Naive thymus-derived CD4-positive, alpha-beta T cell (primary cell): ENCODE measurements at regions of chr1 and their contacts with region 1.

Region 1: DNA sequence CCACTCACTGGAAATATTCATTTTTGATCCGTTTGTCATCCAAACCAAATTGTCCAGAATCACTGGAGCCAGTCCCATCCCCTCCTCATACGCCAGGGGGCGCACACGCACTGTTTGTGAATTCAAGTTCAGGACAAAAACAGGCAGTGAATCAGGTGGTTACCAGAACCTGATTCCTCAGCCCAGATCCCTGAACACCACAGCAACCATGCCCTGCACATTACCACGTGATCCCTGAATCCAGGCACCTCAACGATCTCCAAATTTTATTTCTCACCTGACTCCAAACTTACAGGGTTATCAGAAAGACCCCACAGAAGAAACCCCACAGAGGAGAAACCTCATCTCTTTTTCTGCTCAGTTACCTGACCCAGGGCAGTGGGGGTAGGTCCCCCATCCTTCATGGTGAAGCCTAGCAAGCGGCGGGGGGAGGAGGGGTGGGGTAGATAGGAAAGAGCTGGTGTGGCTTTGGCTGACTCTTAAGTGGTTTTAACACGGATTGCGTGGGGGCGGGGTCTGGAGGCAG is 1.4 kb upstream of the PTPRF start:
- DNase-seq: peak; percentile 53 to 82 (median 75)
- ATAC-seq: peak; percentile 76
- H3K4me3 ChIP-seq: no peak overlapping the region
- H3K4me3 Mint-ChIP-seq: peak overlapping the region; percentile 16 to 97 (median 54)
- H3K27ac ChIP-seq: no peak overlapping the region
- H3K27ac Mint-ChIP-seq: peak overlapping the region in 1 of 9 donors; percentile 69
- H3K4me1 ChIP-seq: peaks cover 0 to 3% of the 10 kb centered on the region in 2 donors
- H3K4me1 Mint-ChIP-seq: peaks cover 16 to 27% (median 22%) of the 10 kb centered on the region in 7 donors
- H3K27me3 ChIP-seq: peaks cover 8 to 9% of the 10 kb centered on the region in 2 donors
- H3K27me3 Mint-ChIP-seq: peaks cover 43 to 57% (median 49%) of the 10 kb centered on the region in 5 donors

Region 2: DNA sequence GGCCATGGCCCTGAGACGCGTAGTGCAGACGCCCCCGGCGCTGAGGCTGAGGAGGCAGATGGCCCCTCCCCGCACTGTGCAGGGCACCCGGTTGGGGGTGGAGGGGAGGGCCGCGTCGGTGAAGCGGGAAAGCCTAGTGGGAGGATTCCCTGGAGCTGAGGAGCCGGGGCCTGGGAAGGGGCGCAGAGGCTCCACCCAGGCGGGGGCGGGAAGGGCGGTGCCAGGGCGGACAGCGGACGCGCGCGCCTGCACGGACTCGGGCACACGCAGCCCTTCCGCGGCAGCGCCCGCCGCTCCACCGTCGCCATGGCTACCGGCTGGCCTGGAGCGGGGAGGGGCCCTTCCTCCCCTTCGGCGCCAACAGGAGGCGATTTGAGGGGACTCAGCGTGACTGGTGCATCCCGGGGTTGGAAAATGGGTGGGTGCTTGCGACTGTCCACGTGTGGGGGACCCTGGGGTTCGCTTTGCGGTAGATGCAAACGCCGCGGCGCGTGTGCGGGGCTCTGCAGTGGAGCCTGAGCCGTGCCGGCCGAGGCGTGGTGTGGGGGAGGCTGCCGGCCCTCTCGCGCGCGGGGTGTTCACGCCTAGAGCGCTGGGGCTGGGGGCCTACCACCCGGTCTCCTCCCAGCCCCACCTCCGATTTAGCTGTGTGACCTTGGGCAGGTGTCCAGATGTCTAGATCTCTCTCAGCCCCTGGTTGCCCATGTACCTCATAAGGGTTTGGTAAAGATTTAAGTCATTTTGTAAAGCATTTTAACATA is 36.5 kb after region 1 on chr1:
- CTCF ChIA-PET with region 1: no interaction called
- POLR2A ChIA-PET with region 1: no interaction called
- intact Hi-C with region 1: loop called in 1 of 2 experiments (anchors 2 kb)
- DNase-seq: peak in 6 of 9 donors; percentile 14 to 78 (median 20)
- ATAC-seq: peak; percentile 76
- H3K4me3 ChIP-seq: peak overlapping the region; percentile 30
- H3K4me3 Mint-ChIP-seq: peak overlapping the region; percentile 56 to 80 (median 75)
- H3K27ac ChIP-seq: no peak overlapping the region
- H3K27ac Mint-ChIP-seq: no peak overlapping the region
- H3K4me1 ChIP-seq: no peaks in the 10 kb centered on the region
- H3K4me1 Mint-ChIP-seq: peaks cover 0 to 12% (median 4%) of the 10 kb centered on the region in 7 donors
- H3K27me3 ChIP-seq: no peaks in the 10 kb centered on the region
- H3K27me3 Mint-ChIP-seq: peaks cover 0 to 12% (median 8%) of the 10 kb centered on the region in 5 donors

Region 3: GRCh38 chr1:43763497-43763973 is 234.3 kb after region 1 on chr1:
- CTCF ChIA-PET with region 1: interaction called, 4 read pairs
- POLR2A ChIA-PET with region 1: no interaction called
- intact Hi-C with region 1: loop called (anchors 1 to 5 kb)
- DNase-seq: peak; percentile 13 to 54 (median 45)
- ATAC-seq: peak; percentile 82
- H3K4me3 ChIP-seq: no peak overlapping the region
- H3K4me3 Mint-ChIP-seq: no peak overlapping the region
- H3K27ac ChIP-seq: no peak overlapping the region
- H3K27ac Mint-ChIP-seq: no peak overlapping the region
- H3K4me1 ChIP-seq: no peaks in the 10 kb centered on the region
- H3K4me1 Mint-ChIP-seq: peaks cover 0 to 12% (median 4%) of the 10 kb centered on the region in 7 donors
- H3K27me3 ChIP-seq: no peaks in the 10 kb centered on the region
- H3K27me3 Mint-ChIP-seq: no peaks in the 10 kb centered on the region

Region 4: DNA sequence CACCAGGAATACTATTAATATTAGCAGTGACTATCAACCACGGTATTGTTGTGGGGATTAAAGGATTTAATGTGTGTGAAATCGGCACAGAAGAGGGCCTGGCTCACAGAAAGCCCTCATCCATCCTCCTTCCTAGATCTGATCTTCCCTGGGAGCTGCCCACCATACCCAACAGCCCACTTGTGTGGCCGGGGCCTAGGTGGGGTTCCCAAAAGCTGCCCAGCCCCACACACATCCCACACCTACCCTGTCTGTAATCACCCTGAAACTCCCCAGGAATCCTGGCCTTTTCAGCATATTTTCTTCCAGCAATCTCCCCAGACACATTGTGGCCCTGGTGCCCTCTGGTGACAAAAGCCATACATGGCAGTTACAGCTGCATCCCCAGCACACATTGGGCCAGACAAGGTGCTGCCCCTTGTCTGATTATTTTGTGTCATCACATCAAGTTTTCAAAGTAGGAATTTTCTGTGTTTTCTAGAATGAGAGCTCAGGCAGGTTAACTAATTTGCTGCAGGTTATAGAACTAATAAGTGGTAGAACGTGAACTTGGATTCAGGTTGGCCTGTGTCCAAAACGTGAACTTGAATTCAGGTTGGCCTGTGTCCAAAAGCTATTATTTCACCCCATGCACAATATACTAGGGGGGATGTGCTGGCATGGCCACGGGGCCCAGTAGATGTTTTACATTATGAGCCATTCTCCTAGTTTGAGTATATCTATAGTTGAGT is 507.3 kb after region 1 on chr1:
- CTCF ChIA-PET with region 1: no interaction called
- POLR2A ChIA-PET with region 1: no interaction called
- intact Hi-C with region 1: loop called (anchors 1 kb)
- DNase-seq: peak; percentile 32 to 71 (median 58)
- ATAC-seq: peak; percentile 88
- H3K4me3 ChIP-seq: no peak overlapping the region
- H3K4me3 Mint-ChIP-seq: peak overlapping the region in 1 of 10 donors; percentile 1
- H3K27ac ChIP-seq: no peak overlapping the region
- H3K27ac Mint-ChIP-seq: peak overlapping the region in 1 of 9 donors; percentile 18
- H3K4me1 ChIP-seq: no peaks in the 10 kb centered on the region
- H3K4me1 Mint-ChIP-seq: peaks cover 0 to 19% (median 0%) of the 10 kb centered on the region in 7 donors
- H3K27me3 ChIP-seq: no peaks in the 10 kb centered on the region
- H3K27me3 Mint-ChIP-seq: peaks cover 0 to 12% (median 0%) of the 10 kb centered on the region in 5 donors